Activated CD8-positive, alpha-beta memory T cell treated with anti-CD3 and anti-CD28 coated beads, Interleukin-2, amount 10 ng/mL, durations not matched to agents 7 days and 5 days (primary cell): ENCODE measurements at regions of chr12 and their contacts with region 1.

Region 1: GRCh38 chr12:76790564-76791552 is 26.9 kb downstream of the ZDHHC17 start:
- DNase-seq: no peak
- ATAC-seq: peak; percentile 27
- H3K4me3 Mint-ChIP-seq: no peak overlapping the region
- H3K27ac Mint-ChIP-seq: no peak overlapping the region
- H3K4me1 Mint-ChIP-seq: peaks cover 2% of the 10 kb centered on the region
- H3K27me3 Mint-ChIP-seq: no peaks in the 10 kb centered on the region

Region 2: DNA sequence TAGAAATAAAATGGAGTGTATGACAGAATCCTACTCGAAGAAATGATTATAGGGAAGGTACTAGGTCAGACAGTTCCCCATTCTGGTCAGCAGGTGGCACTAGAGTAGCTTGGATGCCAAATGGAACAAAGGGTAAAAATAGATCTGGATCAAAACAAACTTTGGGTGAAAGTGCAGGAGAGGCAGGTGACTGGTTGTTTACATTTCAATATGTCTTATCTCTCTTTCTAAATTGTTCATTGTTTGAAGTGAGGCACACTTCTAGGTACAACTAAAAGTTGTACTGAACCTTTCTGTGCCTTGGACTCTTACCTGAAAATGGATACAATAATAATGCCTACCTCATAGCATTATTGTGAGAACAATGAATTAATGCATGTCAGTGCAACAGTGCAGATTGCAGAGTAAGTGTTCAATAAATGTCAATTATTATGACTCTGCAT is 169.3 kb before region 1 on chr12:
- CTCF ChIA-PET with region 1: interaction called, 29 read pairs
- DNase-seq: peak; percentile 80
- ATAC-seq: peak; percentile 72
- H3K4me3 Mint-ChIP-seq: no peak overlapping the region
- H3K27ac Mint-ChIP-seq: no peak overlapping the region
- H3K4me1 Mint-ChIP-seq: peaks cover 4% of the 10 kb centered on the region
- H3K27me3 Mint-ChIP-seq: peaks cover 5% of the 10 kb centered on the region